ENCODE measurements at regions of chr19 and their contacts with region 1.

Region 1: DNA sequence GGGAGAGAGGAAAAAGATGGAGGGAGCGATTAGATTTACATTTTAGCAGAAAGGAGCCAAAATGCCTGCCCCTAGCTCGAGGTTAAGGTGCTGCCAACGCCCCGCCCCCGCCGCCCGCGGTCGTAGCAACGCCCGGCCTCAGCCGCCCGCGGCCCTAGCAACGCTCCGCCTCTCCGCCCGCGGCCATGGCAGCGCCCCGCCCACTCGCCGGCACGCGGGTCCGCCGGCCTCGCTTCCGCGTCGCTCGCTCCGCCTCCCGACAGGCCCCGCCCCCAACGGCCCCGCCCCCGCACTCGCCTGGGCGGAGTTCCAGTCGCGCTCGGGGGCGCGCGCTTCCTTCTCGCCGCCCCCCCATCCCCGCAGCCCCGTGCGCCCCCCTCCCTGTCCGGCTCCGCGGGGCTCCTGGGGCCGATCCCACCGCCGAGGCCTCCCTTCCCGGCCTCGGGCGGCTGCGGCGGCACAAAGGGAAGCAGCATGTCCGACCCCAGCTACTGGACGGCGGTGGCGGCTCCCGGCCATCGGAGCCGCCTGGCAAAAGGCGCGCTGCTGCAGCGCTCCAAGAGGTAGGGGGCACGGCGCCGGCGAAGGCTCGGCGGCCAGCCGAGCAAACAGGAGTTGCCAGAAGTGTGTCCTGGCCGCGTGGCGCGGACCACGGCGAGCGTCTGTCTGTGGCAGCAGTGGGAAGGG is 20.3 kb downstream of the MAST3 start:
- DNase-seq: peak; percentile 83 to 90 (median 87)
- H3K4me3 ChIP-seq: peak overlapping the region; percentile 35 to 81 (median 45)
- H3K4me3 Mint-ChIP-seq: peak overlapping the region; percentile 70 to 77
- H3K27ac ChIP-seq: no peak overlapping the region
- H3K27ac Mint-ChIP-seq: peak overlapping the region in 5 of 7 donors; percentile 73 to 87 (median 83)
- H3K4me1 ChIP-seq: peaks cover 26 to 46% of the 10 kb centered on the region in 2 donors
- H3K4me1 Mint-ChIP-seq: peaks cover 45% of the 10 kb centered on the region
- H3K27me3 ChIP-seq: no peaks in the 10 kb centered on the region
- H3K27me3 Mint-ChIP-seq: peaks cover 0 to 3% (median 2%) of the 10 kb centered on the region in 3 donors
- CTCF ChIP-seq: no peak

Region 2: DNA sequence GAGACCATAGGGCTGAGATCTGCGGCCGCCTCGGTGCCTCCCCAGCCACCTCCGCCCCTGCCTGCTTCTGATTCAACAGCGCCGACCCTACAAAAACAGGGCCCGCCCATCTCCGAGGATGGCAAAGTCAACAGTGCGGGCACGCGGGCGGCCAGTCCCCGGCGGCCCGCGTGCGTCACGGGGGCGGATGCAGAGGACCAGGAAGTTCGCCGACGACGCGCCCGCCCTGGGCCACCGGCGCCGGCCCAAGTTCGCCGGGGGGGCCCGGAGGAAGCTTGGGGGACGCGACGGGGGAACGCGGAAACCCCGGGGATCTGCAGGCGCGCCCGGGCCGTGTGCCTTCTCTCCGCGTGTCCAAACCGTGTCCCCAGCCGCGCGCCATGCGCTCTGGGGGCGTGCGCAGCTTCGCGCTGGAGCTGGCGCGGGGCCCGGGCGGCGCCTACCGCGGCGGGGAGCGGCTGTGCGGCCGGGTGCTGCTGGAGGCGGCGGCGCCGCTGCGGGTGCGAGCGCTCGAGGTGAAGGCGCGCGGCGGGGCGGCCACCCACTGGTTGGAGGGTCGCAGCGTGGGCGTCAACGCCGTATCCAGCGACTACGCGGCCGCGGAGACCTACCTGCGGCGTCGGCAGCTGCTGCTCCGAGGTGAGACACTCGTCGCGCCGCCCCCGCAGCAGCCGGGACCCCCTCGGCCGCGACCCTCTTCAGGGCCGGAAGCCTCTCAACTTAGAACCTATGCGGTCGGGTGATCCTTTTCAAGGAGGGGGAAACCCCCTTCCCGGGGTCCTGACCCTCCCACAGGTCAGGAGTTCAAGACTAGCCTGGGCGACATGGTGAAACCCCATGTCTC is 116.7 kb before region 1 on chr19:
- intact Hi-C with region 1: loop called in 1 of 2 experiments (anchors 5 kb)
- DNase-seq: peak; percentile 94 to 95 (median 94)
- H3K4me3 ChIP-seq: peak overlapping the region; percentile 83 to 87 (median 85)
- H3K4me3 Mint-ChIP-seq: peak overlapping the region; percentile 90 to 92
- H3K27ac ChIP-seq: peak overlapping the region; percentile 80 to 85
- H3K27ac Mint-ChIP-seq: peak overlapping the region; percentile 95 to 98 (median 96)
- H3K4me1 ChIP-seq: peaks cover 27 to 41% of the 10 kb centered on the region in 2 donors
- H3K4me1 Mint-ChIP-seq: peaks cover 29% of the 10 kb centered on the region
- H3K27me3 ChIP-seq: no peaks in the 10 kb centered on the region
- H3K27me3 Mint-ChIP-seq: peaks cover 0 to 4% (median 0%) of the 10 kb centered on the region in 3 donors
- CTCF ChIP-seq: no peak

Region 3: DNA sequence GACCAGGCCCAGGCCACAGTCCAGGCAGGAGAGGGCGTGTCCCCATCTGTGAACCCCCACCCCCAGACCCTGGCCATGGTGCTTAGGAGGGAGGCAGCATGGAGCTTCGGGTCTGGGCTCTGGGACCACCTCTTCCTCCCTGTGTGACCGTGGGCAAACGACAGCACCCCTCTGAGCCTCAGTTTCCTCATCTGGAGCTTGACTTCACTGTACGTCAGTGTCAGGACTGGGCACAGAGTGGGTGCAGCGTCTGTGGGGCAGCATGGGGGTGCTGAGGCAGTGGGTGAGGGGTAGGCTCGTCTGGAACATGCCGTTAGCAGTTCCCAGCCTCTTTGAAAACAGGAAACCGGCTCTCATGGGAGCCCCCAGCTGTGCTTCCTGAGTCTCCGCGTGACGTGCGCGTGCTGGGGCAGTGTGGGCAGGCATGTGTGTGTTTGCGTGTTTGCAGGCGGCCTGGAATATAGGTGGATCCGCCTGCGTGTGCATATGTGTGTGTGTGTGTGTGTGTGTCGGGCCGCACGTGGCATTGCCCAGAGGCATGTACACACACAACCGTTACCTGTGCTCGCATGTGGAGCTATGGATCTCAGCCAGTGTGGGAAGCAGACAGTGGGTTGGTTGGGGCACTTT is 94.1 kb before region 1 on chr19:
- intact Hi-C with region 1: no loop called
- DNase-seq: peak; percentile 92 to 95 (median 93)
- H3K4me3 ChIP-seq: peak overlapping the region in 2 of 3 experiments; percentile 27 to 46
- H3K4me3 Mint-ChIP-seq: peak overlapping the region; percentile 60 to 81
- H3K27ac ChIP-seq: peak overlapping the region; percentile 94 to 97
- H3K27ac Mint-ChIP-seq: peak overlapping the region; percentile 87 to 99 (median 95)
- H3K4me1 ChIP-seq: peaks cover 53 to 57% of the 10 kb centered on the region in 2 donors
- H3K4me1 Mint-ChIP-seq: peaks cover 55% of the 10 kb centered on the region
- H3K27me3 ChIP-seq: no peaks in the 10 kb centered on the region
- H3K27me3 Mint-ChIP-seq: peaks cover 2 to 14% (median 2%) of the 10 kb centered on the region in 3 donors
- CTCF ChIP-seq: no peak

Region 4: GRCh38 chr19:18152444-18152816 is 34.6 kb after region 1 on chr19:
- intact Hi-C with region 1: loop called in 1 of 2 experiments (anchors 5 kb)
- DNase-seq: peak; percentile 99 to 100 (median 100)
- H3K4me3 ChIP-seq: peak overlapping the region; percentile 65 to 92 (median 89)
- H3K4me3 Mint-ChIP-seq: peak overlapping the region; percentile 87 to 93
- H3K27ac ChIP-seq: peak overlapping the region; percentile 94 to 100
- H3K27ac Mint-ChIP-seq: peak overlapping the region; percentile 95 to 99 (median 97)
- H3K4me1 ChIP-seq: peaks cover 30 to 42% of the 10 kb centered on the region in 2 donors
- H3K4me1 Mint-ChIP-seq: peaks cover 36% of the 10 kb centered on the region
- H3K27me3 ChIP-seq: no peaks in the 10 kb centered on the region
- H3K27me3 Mint-ChIP-seq: peaks cover 0 to 2% (median 1%) of the 10 kb centered on the region in 3 donors
- CTCF ChIP-seq: peak; percentile 93

Region 5: DNA sequence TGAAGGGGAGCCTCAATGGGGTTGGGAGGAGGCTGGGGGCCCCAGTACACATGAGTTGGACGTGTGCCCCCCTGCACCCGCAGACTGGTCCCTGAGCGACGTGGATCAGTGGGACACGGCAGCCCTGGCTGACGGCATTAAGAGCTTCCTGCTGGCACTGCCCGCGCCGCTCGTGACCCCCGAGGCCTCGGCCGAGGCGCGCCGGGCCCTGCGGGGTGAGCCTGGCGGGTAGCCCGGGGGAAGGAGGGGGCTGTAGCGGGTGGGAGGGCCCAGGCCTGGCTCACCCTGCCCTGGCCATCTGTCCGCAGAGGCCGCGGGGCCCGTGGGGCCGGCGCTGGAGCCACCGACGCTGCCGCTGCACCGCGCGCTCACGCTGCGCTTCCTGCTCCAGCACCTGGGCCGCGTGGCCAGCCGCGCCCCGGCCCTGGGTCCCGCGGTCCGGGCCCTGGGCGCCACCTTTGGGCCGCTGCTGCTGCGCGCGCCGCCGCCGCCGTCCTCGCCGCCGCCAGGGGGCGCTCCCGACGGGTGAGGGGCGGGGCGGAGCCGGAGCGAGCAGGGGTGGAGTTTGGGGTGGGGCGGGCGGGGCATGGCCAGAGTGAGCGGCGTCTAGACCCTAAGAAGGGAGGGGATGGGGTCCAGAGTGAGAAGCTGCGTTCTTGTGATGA is 43.3 kb after region 1 on chr19:
- intact Hi-C with region 1: loop called (anchors 2 to 5 kb)
- DNase-seq: peak; percentile 54 to 75 (median 63)
- H3K4me3 ChIP-seq: peak overlapping the region in 1 of 3 experiments; percentile 60
- H3K4me3 Mint-ChIP-seq: peak overlapping the region; percentile 48 to 56
- H3K27ac ChIP-seq: no peak overlapping the region
- H3K27ac Mint-ChIP-seq: peak overlapping the region in 3 of 7 donors; percentile 58 to 82 (median 80)
- H3K4me1 ChIP-seq: peaks cover 19 to 29% of the 10 kb centered on the region in 2 donors
- H3K4me1 Mint-ChIP-seq: peaks cover 23% of the 10 kb centered on the region
- H3K27me3 ChIP-seq: no peaks in the 10 kb centered on the region
- H3K27me3 Mint-ChIP-seq: peaks cover 0 to 1% (median 0%) of the 10 kb centered on the region in 3 donors
- CTCF ChIP-seq: peak; percentile 72

Region 6: DNA sequence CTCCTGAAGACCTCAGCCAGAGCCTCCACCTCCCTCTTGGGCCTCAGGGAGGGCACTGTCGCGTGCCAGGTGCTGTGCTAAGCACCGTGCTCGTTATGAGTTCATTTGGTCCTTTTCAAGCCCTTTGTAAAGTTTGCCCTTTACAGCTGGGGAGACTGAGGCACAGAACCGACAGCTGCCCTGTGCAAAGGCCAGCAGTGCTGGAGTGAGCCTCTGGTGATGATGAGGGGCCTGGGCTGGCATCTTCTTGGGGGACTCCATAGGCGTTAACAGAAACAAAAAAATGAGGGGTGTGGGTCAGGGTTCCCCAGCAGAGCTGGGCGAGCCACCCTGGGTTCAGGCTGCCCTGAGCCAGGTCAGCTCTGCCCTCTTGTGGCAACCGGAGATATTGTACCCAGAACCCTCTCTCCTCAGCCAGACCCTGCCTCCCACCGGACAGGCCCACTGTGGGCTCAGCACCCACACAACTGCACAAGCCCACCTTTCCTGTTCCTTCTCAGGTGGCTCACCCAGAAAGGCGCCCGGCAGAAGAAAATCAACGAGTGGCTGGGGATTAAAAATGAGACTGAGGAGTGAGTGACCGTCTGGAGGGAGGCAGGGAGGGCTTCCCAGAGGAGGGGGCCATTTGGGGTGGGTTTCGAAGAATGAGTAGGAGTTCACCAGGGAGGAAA is 50.3 kb after region 1 on chr19:
- intact Hi-C with region 1: loop called in 1 of 2 experiments (anchors 5 kb)
- DNase-seq: peak; percentile 68 to 79 (median 68)
- H3K4me3 ChIP-seq: peak overlapping the region in 2 of 3 experiments; percentile 8 to 100
- H3K4me3 Mint-ChIP-seq: peak overlapping the region; percentile 62 to 63
- H3K27ac ChIP-seq: peak overlapping the region; percentile 99
- H3K27ac Mint-ChIP-seq: peak overlapping the region; percentile 59 to 100 (median 90)
- H3K4me1 ChIP-seq: peaks cover 52 to 57% of the 10 kb centered on the region in 2 donors
- H3K4me1 Mint-ChIP-seq: peaks cover 48% of the 10 kb centered on the region
- H3K27me3 ChIP-seq: no peaks in the 10 kb centered on the region
- H3K27me3 Mint-ChIP-seq: peaks cover 0 to 1% (median 0%) of the 10 kb centered on the region in 3 donors
- CTCF ChIP-seq: peak; percentile 91

Region 7: DNA sequence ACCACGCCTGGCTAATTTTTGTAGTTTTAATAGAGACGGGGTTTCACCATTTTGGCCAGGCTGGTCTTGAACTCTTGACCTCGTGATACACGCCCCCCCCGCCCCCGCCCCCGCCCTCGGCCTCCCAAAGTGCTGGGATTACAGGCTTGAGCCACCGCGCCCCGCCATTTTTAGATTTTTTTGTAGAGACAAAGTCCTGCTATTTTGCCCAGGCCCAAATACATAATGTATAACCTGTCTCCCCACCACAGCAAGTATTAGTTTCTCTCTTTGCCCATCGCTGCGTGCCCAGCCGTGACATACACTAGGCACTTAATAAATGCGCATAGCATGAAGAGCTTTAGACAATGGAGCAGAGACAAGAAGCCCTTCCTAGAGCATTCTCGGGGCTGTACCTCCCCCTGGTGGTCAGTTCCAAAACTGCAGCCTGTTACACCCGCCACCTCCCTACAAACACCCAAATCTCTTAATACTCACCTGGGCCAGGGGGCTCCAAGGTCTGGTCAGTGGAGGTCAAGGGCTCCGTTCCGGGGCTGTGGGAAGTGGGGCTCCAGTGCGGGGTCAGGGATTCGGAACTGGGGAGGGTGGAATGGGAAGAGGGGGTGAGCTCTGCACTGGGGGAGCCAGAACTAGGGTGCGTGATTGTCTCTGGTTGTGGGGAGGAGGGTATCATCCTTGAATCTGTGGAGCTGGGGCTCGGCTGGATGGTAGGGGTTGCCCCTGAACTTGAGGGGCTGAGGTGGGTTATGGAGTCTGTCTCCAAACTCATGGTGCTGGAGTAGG is 133.9 kb after region 1 on chr19:
- intact Hi-C with region 1: loop called (anchors 2 to 5 kb)
- DNase-seq: peak; percentile 56 to 77 (median 76)
- H3K4me3 ChIP-seq: no peak overlapping the region
- H3K4me3 Mint-ChIP-seq: peak overlapping the region in 1 of 2 donors; percentile 16
- H3K27ac ChIP-seq: no peak overlapping the region
- H3K27ac Mint-ChIP-seq: peak overlapping the region in 1 of 7 donors; percentile 42
- H3K4me1 ChIP-seq: peaks cover 20 to 25% of the 10 kb centered on the region in 2 donors
- H3K4me1 Mint-ChIP-seq: peaks cover 21% of the 10 kb centered on the region
- H3K27me3 ChIP-seq: peaks cover 0 to 2% of the 10 kb centered on the region in 2 donors
- H3K27me3 Mint-ChIP-seq: peaks cover 5 to 27% (median 10%) of the 10 kb centered on the region in 3 donors
- CTCF ChIP-seq: peak; percentile 84